Left cardiac atrium (tissue), 4 donors: ENCODE measurements at regions of chrX and their contacts with region 1.

Region 1: DNA sequence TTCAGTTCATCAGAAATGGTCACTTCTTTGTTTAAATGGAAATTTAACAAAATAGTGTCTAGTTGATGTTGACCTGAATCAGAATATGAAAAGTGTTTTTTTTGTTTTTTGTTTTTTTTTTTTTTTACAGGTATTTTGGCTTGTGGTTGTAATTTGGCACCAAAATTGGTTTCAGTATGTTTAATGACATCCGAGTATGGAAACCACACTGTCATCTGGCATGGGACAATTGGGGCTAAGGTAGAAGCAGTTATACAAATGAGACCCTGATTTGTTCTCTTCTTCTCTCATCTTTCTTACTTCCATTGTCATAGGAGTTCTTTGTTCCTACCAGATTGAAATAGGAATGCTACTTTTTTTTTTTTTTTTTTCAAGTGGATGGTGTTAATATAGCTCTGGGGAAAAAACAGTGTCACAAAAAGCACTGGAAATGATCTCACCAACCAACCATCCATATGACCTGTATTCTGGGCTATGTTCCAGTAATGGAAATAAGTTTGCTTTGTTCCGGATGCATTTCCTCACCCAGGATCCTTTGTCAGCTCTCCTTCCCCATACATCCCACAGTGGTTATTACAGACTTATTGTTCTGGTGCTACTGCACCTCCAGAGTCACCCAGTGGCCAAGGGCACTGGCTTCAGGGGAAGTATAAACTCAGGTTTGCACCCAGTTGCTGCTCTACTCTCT is 95.8 kb downstream of the ATXN3L start:
- DNase-seq: no peak
- ATAC-seq: peak; percentile 65 to 67

Region 2: DNA sequence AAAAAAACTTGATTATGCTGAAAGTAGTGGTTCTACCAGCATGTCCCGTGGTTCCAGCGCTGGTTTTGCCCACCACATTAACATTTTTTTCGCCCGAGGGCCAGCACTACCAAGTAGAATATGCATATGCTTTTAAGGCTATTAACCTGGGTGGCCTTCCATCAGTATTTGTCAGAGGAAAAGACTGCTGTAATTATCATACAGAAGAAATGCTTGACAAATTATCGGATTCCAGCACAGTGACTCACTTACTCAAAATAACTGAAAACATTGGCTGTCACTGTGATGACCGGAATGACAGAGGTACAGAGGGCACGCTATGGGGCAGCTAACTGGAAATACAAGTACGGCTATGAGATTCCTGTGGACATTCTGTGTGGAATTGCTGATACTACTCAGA is 398.2 kb before region 1 on chrX:
- intact Hi-C with region 1: no loop called
- DNase-seq: no peak
- ATAC-seq: no peak

Region 3: GRCh38 chrX:13110433-13111324 is 113.3 kb before region 1 on chrX:
- intact Hi-C with region 1: loop called in 1 of 2 experiments (anchors 10 kb)
- DNase-seq: peak; percentile 56
- ATAC-seq: peak; percentile 71 to 95

Region 4: GRCh38 chrX:13387666-13388494 is 163.9 kb after region 1 on chrX:
- intact Hi-C with region 1: no loop called
- DNase-seq: no peak
- ATAC-seq: peak in 1 of 2 donors; percentile 89